ENCODE measurements at regions of chr5 and their contacts with region 1.

Region 1: GRCh38 chr5:142012792-142013388 is at the start of gene GNPDA1:
- DNase-seq: peak; percentile 82
- ATAC-seq: peak; percentile 16
- H3K4me3 Mint-ChIP-seq: peak within 1 kb of the TSS; percentile 83
- H3K27ac Mint-ChIP-seq: peak within 1 kb of the TSS; percentile 93
- H3K4me1 Mint-ChIP-seq: peaks cover 79% of the 10 kb centered on the region
- H3K27me3 Mint-ChIP-seq: no peaks in the 10 kb centered on the region
- total RNA-seq, gene GNPDA1: 75.4 to 77.4 TPM

Region 2: DNA sequence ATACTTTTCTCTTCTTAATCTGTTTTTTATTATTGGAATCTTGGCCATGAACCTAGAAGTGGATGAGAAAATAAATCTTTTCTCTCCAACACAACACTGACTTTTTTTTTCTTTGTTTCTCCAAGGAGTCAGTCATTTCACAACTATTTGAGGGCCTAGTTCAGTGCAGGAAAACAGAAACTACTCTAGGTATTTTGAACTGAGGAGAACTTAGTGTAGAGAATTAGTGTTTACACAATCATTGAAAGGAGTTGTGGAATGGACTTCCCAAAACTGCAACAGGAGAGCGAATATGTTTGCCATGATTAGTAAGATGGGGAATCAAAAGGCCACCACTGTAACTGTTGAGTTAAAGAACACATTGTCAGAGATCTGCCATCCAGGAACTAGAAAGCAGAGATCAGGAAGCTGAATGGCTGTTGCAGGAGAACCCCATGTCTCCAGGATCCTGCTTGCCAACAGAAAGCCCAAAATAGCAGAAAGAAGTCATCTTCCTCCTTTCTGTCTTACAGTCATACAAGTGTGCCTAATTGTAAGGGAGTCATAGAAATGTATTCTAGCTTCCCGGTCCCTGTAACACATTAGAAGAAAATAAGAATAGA is 114.3 kb before region 1 on chr5:
- CTCF ChIA-PET with region 1: no interaction called
- POLR2A ChIA-PET with region 1: no interaction called
- intact Hi-C with region 1: no loop called
- DNase-seq: no peak
- ATAC-seq: no peak
- H3K4me3 Mint-ChIP-seq: no peak overlapping the region
- H3K27ac Mint-ChIP-seq: no peak overlapping the region
- H3K4me1 Mint-ChIP-seq: no peaks in the 10 kb centered on the region
- H3K27me3 Mint-ChIP-seq: peaks cover 10% of the 10 kb centered on the region

Region 3: DNA sequence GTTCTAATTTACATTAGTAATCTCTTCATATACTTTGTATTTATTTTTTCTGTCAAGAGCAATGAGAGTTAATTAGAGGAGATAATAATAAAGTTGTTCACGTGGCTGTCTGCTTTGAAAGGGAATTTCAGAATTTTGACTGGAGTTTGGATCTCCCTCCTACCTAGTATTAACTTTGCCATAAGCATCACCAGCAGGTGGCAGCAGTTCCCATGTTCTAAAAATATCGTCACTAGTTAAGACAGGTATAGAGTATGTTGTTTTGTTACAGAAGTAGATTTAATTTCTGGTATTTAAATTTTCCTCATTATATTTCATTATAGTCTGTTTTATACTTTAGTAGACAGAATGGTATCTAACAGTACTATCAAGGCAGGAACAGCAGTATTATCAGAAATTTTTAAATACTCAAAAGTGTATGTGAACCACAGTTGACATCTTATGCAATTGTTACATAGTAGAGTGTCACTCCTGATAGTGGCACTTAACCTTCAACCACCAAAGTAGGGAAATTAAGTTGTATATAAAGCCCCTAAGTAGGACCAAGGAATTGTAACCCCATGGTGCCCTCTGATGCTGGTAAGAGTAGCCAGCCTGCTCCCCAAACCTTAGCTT is 20.4 kb before region 1 on chr5:
- CTCF ChIA-PET with region 1: interaction called, 29 read pairs
- POLR2A ChIA-PET with region 1: interaction called, 4 read pairs
- intact Hi-C with region 1: loop called in 1 of 2 experiments (anchors 2 kb)
- DNase-seq: peak; percentile 89
- ATAC-seq: peak; percentile 88
- H3K4me3 Mint-ChIP-seq: no peak overlapping the region
- H3K27ac Mint-ChIP-seq: peak overlapping the region; percentile 19
- H3K4me1 Mint-ChIP-seq: no peaks in the 10 kb centered on the region
- H3K27me3 Mint-ChIP-seq: no peaks in the 10 kb centered on the region

Region 4: DNA sequence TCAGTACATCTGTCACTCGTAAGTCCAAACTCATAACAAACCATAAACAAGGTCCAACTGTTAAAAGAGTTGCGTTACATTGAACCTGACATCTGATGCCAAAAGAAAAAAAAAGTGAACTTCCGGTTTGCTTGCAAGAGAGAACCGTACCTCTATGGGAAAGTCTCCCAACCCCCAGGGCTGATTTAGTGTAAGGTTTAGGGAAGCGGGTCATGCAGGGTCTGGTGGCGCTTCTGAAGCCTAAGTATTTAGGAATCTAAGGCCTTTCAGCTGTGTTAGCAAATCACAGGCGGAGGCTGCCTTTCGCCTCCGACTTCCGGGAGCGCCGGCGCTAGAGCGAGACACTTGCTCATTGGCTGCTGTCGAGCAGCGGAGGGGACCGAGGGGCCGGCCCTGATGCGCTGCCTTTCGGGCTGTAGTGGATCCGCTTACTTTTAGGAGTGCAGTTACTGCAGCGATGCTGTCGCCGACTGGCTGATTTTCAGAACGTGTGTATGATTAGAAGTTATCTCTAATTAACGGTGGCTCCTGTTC is 11.9 kb after region 1 on chr5:
- CTCF ChIA-PET with region 1: interaction called, 21 read pairs
- POLR2A ChIA-PET with region 1: interaction called, 4 read pairs
- intact Hi-C with region 1: loop called in 1 of 2 experiments (anchors 1 kb)
- DNase-seq: peak; percentile 94
- ATAC-seq: peak; percentile 100
- H3K4me3 Mint-ChIP-seq: peak overlapping the region; percentile 72
- H3K27ac Mint-ChIP-seq: peak overlapping the region; percentile 94
- H3K4me1 Mint-ChIP-seq: peaks cover 19% of the 10 kb centered on the region
- H3K27me3 Mint-ChIP-seq: no peaks in the 10 kb centered on the region

Region 5: DNA sequence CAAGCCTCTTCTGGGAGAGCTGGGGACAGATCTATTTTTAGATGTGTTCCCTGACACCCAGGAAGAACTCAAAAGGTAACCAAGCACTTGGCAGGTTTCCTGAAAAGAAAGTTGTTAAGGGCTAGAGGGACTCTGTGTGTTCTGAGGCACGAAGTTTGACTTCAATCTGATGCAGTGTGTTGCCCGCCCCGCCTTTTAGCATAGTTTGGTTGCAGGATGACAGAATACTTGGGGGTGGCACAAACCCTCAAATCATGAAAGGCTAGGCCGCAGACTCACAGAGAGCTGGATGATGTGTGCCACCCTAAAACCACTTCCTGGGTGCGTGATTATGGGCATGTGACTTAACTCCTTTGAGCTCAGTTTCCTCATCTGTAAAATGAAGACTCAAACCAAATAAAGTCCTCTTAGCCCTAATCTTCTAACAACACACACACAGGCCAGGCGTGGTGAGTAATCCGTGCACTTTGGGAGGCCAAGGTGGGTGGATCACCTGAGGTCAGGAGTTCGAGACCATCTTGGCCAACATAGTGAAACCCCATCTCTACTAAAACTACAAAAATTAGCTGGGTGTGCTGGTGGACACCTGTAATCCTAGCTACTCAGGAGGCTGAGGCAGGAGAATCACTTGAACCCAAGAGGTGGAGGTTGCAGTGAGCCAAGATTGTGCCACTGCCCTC is 82.9 kb after region 1 on chr5:
- CTCF ChIA-PET with region 1: interaction called, 8 read pairs
- POLR2A ChIA-PET with region 1: interaction called, 28 read pairs
- intact Hi-C with region 1: loop called (anchors 1 kb)
- DNase-seq: peak; percentile 93
- ATAC-seq: peak; percentile 91
- H3K4me3 Mint-ChIP-seq: peak overlapping the region; percentile 53
- H3K27ac Mint-ChIP-seq: peak overlapping the region; percentile 97
- H3K4me1 Mint-ChIP-seq: peaks cover 77% of the 10 kb centered on the region
- H3K27me3 Mint-ChIP-seq: no peaks in the 10 kb centered on the region

Region 6: DNA sequence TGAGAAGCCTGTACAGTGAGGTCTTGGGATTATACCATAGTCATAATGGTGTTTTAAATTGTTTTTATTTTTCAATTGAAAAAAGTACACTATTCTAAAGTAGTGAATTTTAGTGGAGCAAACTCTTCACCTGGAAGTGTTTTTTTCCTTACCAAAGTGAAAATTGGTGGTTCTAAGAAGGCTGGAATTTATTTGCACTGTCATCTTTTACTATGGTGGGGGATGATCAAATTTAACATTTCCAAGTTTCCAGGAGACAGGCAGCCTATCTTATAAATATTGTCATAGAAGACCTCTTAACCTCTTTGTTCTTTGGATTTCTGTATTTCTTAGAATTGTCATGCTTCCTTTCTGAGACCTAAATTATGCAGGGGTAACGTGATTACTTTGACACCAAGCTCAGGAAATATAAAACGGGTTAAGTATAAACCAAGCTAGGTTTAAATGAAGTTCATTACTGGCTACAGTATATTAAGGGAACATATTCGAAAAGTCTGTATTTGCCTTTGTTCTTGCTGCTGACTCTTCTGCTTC is 115.9 kb after region 1 on chr5:
- CTCF ChIA-PET with region 1: interaction called, 13 read pairs
- POLR2A ChIA-PET with region 1: interaction called, 8 read pairs
- intact Hi-C with region 1: no loop called
- DNase-seq: no peak
- ATAC-seq: peak; percentile 59
- H3K4me3 Mint-ChIP-seq: no peak overlapping the region
- H3K27ac Mint-ChIP-seq: peak overlapping the region; percentile 70
- H3K4me1 Mint-ChIP-seq: peaks cover 57% of the 10 kb centered on the region
- H3K27me3 Mint-ChIP-seq: no peaks in the 10 kb centered on the region

Region 7: DNA sequence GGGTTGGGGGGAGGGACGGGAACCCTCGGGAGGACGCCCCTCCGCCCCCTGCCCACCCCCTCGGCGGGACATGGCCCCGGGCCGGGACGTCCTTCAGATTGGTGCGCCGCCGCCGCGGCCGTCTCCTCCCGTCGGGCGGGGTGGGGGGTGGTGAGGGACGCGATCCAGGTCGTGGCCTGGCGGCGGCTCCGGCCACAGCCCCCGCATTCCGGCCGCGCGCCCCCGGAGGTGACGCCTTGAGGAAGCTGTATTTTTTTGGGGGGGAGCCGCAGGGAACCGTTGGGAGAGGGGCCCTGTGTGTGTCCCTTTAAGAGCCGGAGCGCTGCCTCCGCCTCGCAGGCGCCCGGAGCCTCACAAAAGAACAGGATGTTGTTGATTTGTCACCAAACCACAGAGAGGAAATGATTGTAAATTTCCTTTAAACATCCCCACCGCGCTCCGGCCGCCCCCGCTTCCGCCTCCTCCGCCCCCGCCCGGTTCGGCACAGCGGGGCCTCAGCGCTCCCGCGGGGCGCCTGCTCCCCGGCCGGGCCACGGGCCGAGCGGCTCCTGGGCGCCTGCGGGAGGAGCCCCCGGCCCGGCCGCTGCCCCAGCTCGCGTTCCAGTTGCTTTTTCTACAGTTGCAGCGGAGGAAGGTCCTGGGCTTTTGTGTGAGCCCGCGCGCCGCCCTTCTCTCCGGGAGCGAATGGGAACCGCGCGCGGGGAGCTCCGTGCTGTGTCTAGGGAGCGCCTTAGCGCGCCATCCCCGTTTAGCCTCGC is 344.0 kb after region 1 on chr5:
- CTCF ChIA-PET with region 1: no interaction called
- POLR2A ChIA-PET with region 1: no interaction called
- intact Hi-C with region 1: loop called (anchors 2 to 5 kb)
- DNase-seq: peak; percentile 94
- ATAC-seq: peak; percentile 85
- H3K4me3 Mint-ChIP-seq: peak overlapping the region; percentile 70
- H3K27ac Mint-ChIP-seq: peak overlapping the region; percentile 96
- H3K4me1 Mint-ChIP-seq: peaks cover 49% of the 10 kb centered on the region
- H3K27me3 Mint-ChIP-seq: no peaks in the 10 kb centered on the region

Region 8: DNA sequence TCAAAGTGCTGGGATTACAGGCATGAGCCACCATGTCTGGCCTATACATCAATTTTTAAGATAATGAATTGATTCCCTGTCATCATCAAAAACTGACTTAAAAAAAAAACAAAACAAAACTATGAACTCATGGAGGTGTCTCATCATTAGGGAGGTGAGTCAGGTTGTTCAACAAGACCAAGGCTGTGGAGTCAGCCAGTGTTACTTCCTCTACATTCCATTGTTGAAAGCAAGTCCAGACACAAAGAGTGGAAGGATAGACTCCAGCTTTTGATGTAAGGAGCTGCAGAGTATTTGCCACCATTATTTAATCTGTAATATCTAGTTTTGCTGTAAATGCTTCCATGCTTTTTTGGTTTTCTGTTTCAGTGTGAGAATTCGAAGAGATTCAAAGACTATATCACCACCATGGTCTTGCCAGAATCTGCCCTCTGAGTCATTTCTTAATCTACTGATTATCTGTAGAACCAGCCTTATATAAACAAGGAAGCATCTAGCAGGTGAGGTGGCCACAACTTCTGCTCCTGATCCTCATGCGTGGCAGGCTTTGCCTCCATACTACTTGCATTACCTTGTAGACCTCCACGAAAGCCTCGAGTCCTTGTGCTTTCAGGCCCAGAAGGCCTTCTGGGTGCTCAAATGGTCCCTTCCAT is 516.9 kb after region 1 on chr5:
- CTCF ChIA-PET with region 1: no interaction called
- POLR2A ChIA-PET with region 1: no interaction called
- intact Hi-C with region 1: no loop called
- DNase-seq: no peak
- ATAC-seq: peak; percentile 71
- H3K4me3 Mint-ChIP-seq: no peak overlapping the region
- H3K27ac Mint-ChIP-seq: no peak overlapping the region
- H3K4me1 Mint-ChIP-seq: peaks cover 8% of the 10 kb centered on the region
- H3K27me3 Mint-ChIP-seq: no peaks in the 10 kb centered on the region

Region 9: GRCh38 chr5:142821733-142822487 is 809.0 kb after region 1 on chr5:
- CTCF ChIA-PET with region 1: no interaction called
- POLR2A ChIA-PET with region 1: no interaction called
- intact Hi-C with region 1: loop called in 1 of 2 experiments (anchors 10 kb)
- DNase-seq: peak; percentile 29
- ATAC-seq: peak; percentile 93
- H3K4me3 Mint-ChIP-seq: no peak overlapping the region
- H3K27ac Mint-ChIP-seq: peak overlapping the region; percentile 53
- H3K4me1 Mint-ChIP-seq: peaks cover 74% of the 10 kb centered on the region
- H3K27me3 Mint-ChIP-seq: no peaks in the 10 kb centered on the region

Measured in activated CD4-positive, alpha-beta T cell treated with anti-CD3 and anti-CD28 coated beads for 36 hours (primary cell).